Endothelial cell of umbilical vein (primary cell): ENCODE measurements at regions of chr16 and their contacts with region 1.

Region 1: GRCh38 chr16:106623-107324 is 28.7 kb downstream of the MPG start:
- DNase-seq: peak; percentile 71
- H3K4me3 ChIP-seq: no peak overlapping the region
- H3K27ac ChIP-seq: no peak overlapping the region
- H3K4me1 ChIP-seq: peaks cover 5% of the 10 kb centered on the region
- H3K27me3 ChIP-seq: no peaks in the 10 kb centered on the region
- CTCF ChIP-seq: peak; percentile 74 to 83
- POLR2A ChIP-seq: no peak

Region 2: DNA sequence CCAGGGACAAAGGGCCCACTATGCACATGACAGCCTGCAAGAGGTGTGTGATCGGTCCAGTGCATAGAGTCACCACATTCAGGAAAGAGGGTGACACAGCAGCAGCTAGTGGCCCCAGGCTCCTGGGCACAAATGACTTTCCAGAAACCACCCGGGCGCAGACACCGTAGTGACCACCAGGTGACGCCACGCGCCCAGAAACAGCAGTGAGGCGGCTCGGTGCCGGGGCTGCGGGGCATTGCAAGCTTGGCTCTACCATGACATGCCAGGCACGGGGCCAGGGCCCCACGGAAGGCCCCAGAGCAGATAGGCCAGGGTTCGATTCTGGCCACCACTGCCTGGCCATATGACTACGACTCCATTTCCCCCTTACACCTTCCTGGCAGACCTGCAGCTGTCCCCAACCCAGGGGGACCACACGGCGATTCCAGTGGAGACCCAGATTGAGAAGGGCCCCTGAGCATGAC is 41.1 kb before region 1 on chr16:
- CTCF ChIA-PET with region 1: interaction called, 57 read pairs
- POLR2A ChIA-PET with region 1: no interaction called
- dilution Hi-C with region 1: no loop called
- intact Hi-C with region 1: no loop called
- DNase-seq: peak; percentile 72
- H3K4me3 ChIP-seq: no peak overlapping the region
- H3K27ac ChIP-seq: no peak overlapping the region
- H3K4me1 ChIP-seq: no peaks in the 10 kb centered on the region
- H3K27me3 ChIP-seq: no peaks in the 10 kb centered on the region
- CTCF ChIP-seq: peak; percentile 98
- POLR2A ChIP-seq: peak; percentile 27

Region 3: GRCh38 chr16:117379-118365 is 10.9 kb after region 1 on chr16:
- CTCF ChIA-PET with region 1: interaction called, 34 read pairs
- POLR2A ChIA-PET with region 1: no interaction called
- dilution Hi-C with region 1: no loop called
- intact Hi-C with region 1: no loop called
- DNase-seq: peak; percentile 48
- H3K4me3 ChIP-seq: no peak overlapping the region
- H3K27ac ChIP-seq: no peak overlapping the region
- H3K4me1 ChIP-seq: peaks cover 11% of the 10 kb centered on the region
- H3K27me3 ChIP-seq: no peaks in the 10 kb centered on the region
- CTCF ChIP-seq: peak; percentile 66 to 85
- POLR2A ChIP-seq: no peak

Region 4: DNA sequence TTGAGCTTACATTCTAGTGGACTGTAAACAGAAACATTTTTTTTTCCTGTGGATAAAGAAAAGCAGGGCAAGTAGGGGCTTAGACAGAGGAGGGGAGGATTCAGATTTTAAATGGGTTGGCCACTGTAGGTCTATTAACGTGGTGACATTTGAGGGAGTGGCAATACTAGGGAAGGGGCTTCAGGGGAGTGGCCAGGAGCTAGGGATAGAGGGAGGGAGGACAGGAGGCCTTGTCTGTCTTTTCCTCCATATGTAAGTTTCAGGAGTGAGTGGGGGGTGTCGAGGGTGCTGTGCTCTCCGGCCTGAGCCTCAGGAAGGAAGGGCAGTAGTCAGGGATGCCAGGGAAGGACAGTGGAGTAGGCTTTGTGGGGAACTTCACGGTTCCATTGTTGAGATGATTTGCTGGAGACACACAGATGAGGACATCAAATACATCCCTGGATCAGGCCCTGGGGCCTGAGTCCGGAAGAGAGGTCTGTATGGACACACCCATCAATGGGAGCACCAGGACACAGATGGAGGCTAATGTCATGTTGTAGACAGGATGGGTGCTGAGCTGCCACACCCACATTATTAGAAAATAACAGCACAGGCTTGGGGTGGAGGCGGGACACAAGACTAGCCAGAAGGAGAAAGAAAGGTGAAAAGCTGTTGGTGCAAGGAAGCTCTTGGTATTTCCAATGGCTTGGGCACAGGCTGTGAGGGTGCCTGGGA is 52.5 kb after region 1 on chr16:
- CTCF ChIA-PET with region 1: interaction called, 24 read pairs
- POLR2A ChIA-PET with region 1: no interaction called
- dilution Hi-C with region 1: no loop called
- intact Hi-C with region 1: no loop called
- DNase-seq: no peak
- H3K4me3 ChIP-seq: no peak overlapping the region
- H3K27ac ChIP-seq: no peak overlapping the region
- H3K4me1 ChIP-seq: peaks cover 8% of the 10 kb centered on the region
- H3K27me3 ChIP-seq: peaks cover 7 to 12% of the 10 kb centered on the region in 2 experiments
- CTCF ChIP-seq: no peak
- POLR2A ChIP-seq: no peak

Region 5: GRCh38 chr16:200388-200787 is 93.6 kb after region 1 on chr16:
- CTCF ChIA-PET with region 1: interaction called, 11 read pairs
- POLR2A ChIA-PET with region 1: no interaction called
- dilution Hi-C with region 1: no loop called
- intact Hi-C with region 1: no loop called
- DNase-seq: no peak
- H3K4me3 ChIP-seq: no peak overlapping the region
- H3K27ac ChIP-seq: no peak overlapping the region
- H3K4me1 ChIP-seq: no peaks in the 10 kb centered on the region
- H3K27me3 ChIP-seq: no peaks in the 10 kb centered on the region
- CTCF ChIP-seq: no peak
- POLR2A ChIP-seq: no peak

Region 6: GRCh38 chr16:220021-220420 is 113.2 kb after region 1 on chr16:
- CTCF ChIA-PET with region 1: no interaction called
- POLR2A ChIA-PET with region 1: no interaction called
- dilution Hi-C with region 1: no loop called
- intact Hi-C with region 1: no loop called
- DNase-seq: no peak
- H3K4me3 ChIP-seq: no peak overlapping the region
- H3K27ac ChIP-seq: no peak overlapping the region
- H3K4me1 ChIP-seq: no peaks in the 10 kb centered on the region
- H3K27me3 ChIP-seq: no peaks in the 10 kb centered on the region
- CTCF ChIP-seq: no peak
- POLR2A ChIP-seq: no peak